ENCODE measurements at regions of chr17 and their contacts with region 1.

Region 1: DNA sequence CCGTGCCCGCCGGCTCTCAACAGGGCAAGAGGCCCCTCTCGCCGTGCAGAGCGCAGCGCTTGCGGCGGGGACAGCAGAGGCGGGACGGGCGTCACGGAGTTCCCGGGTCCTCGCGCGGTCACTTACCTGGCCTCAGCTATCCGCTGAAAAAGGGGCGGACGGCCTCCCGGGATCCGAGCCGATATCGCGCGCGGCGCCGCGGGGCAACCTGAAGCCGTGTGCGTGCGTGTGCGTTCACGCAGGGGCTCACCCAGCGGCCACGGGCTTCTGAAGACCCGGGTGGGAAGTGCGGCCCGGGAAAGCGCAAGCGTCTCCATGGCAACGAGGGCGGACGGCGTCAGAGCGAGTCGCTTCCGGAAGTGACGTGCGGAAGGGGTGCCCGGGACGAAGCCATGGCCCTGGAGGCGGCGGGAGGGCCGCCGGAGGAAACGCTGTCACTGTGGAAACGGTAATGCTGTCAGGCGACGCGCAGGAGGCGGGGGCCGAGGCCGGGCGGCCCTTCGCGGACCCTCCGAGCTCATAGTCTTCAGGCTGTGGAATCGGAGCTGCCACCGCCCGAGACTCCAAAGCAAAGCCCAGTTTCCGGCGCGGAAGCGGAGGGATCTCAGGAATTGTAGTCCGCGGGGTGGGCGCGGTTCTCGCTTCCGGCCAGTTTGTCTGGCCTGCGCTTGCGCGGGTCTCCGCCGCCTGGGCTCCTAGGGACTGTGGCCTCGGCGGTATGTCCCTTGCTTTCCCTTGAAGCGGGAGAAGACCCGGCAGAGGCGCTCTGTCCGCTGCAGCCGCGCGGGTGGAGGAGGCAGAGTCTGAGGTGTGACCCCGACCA is at the start of gene ENDOV:
- DNase-seq: peak; percentile 98
- total RNA-seq, gene ENDOV: 14.1 to 15.5 TPM

Region 2: DNA sequence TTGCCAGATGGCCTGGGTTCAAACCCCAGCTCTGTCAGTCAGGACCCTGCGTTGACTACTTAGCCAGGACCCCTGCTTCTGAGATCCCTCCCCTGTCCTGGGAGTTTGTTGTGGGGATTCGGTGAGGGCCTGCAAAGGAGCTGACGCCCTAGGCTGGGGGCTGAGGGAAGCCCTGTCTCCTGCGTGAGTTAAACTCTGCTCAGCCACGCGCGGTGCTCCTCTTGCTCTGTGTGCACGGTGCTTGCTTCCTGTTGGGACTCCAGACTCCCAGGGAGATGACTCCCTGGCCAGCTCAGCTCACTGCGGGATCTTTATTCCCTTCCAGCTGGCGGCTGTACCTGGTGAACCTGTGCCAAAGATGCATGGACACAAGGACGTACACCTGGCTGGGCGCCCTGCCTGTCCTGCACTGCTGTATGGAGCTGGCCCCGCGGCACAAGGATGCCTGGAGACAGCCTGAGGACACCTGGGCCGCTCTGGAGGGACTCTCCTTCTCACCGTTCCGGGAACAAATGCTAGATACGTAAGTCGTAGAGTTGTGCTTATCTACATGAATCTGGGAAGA is 116.9 kb before region 1 on chr17:
- intact Hi-C with region 1: no loop called
- DNase-seq: peak; percentile 78

Region 3: DNA sequence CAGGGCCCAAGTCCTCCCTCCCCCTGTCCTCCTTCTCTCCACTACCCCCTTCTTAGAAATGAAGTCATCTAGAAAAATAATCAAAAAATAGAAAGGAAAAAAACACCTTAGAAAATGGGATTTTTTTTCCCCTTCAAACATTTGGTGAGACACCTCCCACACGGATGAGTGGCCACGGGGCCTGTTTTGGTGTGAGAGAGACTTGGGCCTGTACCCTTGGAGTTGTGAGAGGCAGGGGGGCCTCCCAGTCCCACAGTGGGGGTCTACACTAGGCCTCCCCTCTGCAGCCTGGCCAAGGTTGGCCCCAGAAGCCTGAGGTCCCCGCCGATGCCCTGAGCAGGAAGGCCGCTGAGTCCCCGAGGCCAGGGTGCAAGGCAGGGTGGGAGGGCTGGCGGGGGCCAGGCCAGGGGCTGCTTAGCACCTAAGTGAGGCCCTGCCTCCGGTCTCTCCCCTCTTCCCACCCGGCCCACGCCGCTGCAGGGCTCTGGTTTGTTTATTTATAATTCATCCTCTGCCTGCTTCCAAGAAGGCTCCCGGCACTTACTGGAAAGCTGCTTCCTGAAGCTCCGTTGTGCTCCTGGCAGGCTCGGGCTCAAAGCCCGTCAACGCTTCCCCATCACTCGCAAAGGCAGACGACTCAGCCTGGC is 35.0 kb after region 1 on chr17:
- intact Hi-C with region 1: loop called in 1 of 2 experiments (anchors 1 kb)
- DNase-seq: no peak

Region 4: DNA sequence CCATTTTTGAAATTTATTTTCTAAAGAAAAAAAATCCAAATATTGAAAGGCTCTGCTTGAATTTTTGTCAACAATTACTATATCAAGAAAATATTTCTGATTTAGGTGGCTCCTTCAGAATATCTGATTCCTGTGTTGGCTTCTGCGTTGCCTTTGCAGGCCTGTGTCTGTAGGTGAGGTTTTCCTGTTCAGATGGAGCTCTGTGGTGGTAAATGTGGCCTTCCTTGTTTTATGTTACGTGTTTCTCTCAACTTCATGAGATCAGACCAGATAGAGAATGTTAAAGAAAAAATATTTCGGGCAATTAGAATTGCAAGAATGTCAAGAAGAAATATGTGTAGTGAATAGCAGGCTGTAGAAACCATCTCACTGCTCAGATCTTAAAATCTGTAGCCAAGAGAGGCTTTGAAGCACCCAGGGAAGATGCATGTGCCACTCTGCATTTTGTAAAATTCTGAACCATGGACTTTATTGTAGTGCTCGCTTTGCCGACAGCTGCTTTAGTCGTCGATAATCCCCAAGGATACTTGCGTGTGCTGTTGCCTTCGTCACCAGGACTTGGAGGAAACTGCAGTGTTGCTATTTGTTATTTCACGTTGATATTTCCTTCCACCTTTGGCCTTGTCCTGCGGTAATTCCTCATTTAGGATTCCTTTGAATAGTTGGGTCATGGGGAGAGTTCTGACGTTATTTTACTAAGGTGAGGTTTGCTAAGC is 199.5 kb after region 1 on chr17:
- intact Hi-C with region 1: no loop called
- DNase-seq: no peak

Measured in posterior vena cava (tissue), 2 donors.